Psoas muscle (tissue), 8 donors: ENCODE measurements at regions of chr11 and their contacts with region 1.

Region 1: DNA sequence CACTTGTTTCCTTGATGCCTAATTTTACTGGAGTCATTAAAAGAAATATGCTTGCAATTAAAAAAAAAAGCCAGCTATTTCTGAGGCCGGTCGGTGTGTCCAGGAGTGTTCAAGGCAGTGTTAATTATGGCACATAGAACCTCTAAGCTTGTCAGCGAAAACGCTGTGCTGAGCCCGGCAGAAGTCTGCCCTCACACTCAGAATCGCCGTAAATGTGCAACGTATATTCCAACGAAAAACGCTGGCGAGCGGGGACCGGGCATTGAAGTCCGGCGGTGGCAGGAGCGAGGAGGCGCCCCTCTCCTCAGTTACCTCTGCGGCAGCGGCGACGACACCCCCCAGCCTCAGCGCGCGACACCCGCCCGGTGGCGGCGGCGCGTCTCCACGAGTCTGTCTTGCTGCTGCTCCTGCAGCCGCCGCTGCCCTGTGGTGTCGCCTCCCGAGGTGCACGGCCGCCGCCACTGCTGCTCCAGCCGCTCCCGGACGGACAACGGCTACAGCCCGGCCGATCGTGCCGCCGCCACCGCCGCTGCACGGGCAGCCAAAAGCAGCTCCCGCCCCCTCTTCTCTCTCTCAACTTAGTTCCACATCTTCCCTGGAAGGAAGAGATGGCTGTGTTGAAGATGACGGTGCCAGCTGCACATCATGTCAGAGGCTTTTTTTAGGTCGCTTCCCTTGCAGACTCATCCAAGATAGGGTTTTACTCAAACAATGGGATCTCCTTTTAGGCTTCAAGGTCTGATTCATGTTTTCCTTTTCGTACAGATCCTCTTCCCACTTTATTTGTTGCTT is 56.0 kb downstream of the JAM3 start:
- DNase-seq: peak; percentile 51 to 70
- ATAC-seq: peak; percentile 70 to 88 (median 81)
- H3K4me3 ChIP-seq: peak overlapping the region; percentile 72
- H3K27ac ChIP-seq: peak overlapping the region; percentile 69
- H3K4me1 ChIP-seq: peaks cover 45% of the 10 kb centered on the region
- H3K27me3 ChIP-seq: no peaks in the 10 kb centered on the region
- CTCF ChIP-seq: no peak

Region 2: GRCh38 chr11:134069426-134070341 is 55.2 kb before region 1 on chr11:
- intact Hi-C with region 1: loop called in 1 of 2 experiments (anchors 5 kb)
- DNase-seq: peak in 1 of 2 donors; percentile 34
- ATAC-seq: peak; percentile 41 to 70 (median 58)
- H3K4me3 ChIP-seq: peak overlapping the region; percentile 90
- H3K27ac ChIP-seq: peak overlapping the region; percentile 70
- H3K4me1 ChIP-seq: no peaks in the 10 kb centered on the region
- H3K27me3 ChIP-seq: peaks cover 0 to 12% (median 4%) of the 10 kb centered on the region in 3 donors
- CTCF ChIP-seq: no peak

Region 3: DNA sequence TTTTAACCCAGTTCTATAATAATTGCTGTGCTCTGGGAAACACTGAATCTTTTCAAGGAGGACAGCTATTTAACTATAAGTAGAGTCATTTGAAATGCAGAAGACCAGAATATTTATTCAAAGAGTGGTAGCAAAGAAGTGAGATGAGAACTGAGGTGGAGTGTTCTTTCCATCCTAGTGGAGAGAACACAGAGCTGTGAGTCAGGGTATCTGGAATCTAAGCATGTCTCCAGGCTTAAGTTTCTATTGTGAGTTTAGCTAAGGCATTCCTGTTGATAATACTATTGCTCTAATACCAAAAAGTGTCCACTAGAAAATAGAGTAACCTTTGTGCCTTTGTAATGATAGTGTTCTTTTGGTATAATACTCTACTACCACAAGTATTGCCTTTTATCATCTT is 23.6 kb before region 1 on chr11:
- intact Hi-C with region 1: no loop called
- DNase-seq: no peak
- ATAC-seq: no peak
- H3K4me3 ChIP-seq: no peak overlapping the region
- H3K27ac ChIP-seq: no peak overlapping the region
- H3K4me1 ChIP-seq: no peaks in the 10 kb centered on the region
- H3K27me3 ChIP-seq: no peaks in the 10 kb centered on the region
- CTCF ChIP-seq: no peak